ENCODE measurements at regions of chr6 and their contacts with region 1.

Region 1: GRCh38 chr6:28225056-28225834 is at the start of gene ZSCAN9:
- DNase-seq: peak; percentile 93
- ATAC-seq: peak; percentile 93
- H3K4me3 ChIP-seq: peak within 1 kb of the TSS; percentile 92
- H3K27ac ChIP-seq: peak within 1 kb of the TSS; percentile 42
- H3K4me1 ChIP-seq: peaks cover 20% of the 10 kb centered on the region
- H3K27me3 ChIP-seq: no peaks in the 10 kb centered on the region
- CTCF ChIP-seq: no peak
- total RNA-seq, gene ZSCAN9: 10.8 and 11.7 TPM in 2 replicates

Region 2: GRCh38 chr6:28252009-28252975 is 27.0 kb after region 1 on chr6 and contains the start of gene ZKSCAN4:
- CTCF ChIA-PET with region 1: no interaction called
- POLR2A ChIA-PET with region 1: no interaction called
- intact Hi-C with region 1: loop called (anchors 1 kb)
- DNase-seq: peak; percentile 93
- ATAC-seq: peak; percentile 89
- H3K4me3 ChIP-seq: peak within 1 kb of the TSS; percentile 93
- H3K27ac ChIP-seq: 0 out of 2 replicates have a peak within 1 kb of the TSS, but pooled peaks have one; percentile 4
- H3K4me1 ChIP-seq: peaks cover 12% of the 10 kb centered on the region
- H3K27me3 ChIP-seq: no peaks in the 10 kb centered on the region
- CTCF ChIP-seq: no peak
- total RNA-seq, gene ZKSCAN4: 2.3 and 3.7 TPM in 2 replicates

Region 3: DNA sequence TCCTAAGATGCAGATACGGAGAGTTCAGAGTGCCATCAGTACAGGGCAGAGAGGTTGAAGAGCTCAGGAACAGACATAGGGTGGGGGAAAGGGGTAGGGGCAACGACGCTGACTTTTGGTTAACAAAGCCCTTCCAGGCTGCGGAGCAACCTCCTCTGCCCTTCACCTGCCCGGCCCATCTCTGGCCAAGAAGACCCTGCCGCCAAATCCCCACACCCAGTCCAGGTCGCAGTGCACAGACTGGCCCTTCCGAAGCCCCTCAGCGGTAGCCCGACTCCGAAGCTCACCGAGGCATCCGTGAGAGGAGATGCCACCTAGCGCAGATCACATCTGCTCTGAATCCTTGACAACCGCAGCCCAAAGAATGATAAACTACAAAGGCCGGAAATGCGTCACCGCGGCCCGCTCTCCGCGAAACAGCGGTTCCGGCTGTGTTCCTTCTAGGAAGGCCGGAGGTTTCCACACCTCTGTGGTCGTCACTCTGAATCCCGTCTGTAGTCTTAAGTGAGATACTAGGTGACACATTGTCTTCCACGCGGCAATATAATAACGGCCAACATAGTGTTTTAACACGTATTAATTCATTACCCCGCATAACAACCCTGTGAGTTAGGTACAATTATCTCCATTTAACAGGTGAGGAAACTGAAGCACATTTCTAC is 218.0 kb after region 1 on chr6 and contains the start of gene ZSCAN23:
- CTCF ChIA-PET with region 1: no interaction called
- POLR2A ChIA-PET with region 1: no interaction called
- intact Hi-C with region 1: no loop called
- DNase-seq: peak; percentile 91
- ATAC-seq: peak; percentile 98
- H3K4me3 ChIP-seq: peak within 1 kb of the TSS; percentile 88
- H3K27ac ChIP-seq: no peak within 1 kb of the TSS
- H3K4me1 ChIP-seq: peaks cover 9% of the 10 kb centered on the region; the same call in 1 of the 2 replicates
- H3K27me3 ChIP-seq: no peaks in the 10 kb centered on the region
- CTCF ChIP-seq: no peak; the same call in 1 of the 2 replicates
- total RNA-seq, gene ZSCAN23: 2.2 and 3.4 TPM in 2 replicates

Region 4: DNA sequence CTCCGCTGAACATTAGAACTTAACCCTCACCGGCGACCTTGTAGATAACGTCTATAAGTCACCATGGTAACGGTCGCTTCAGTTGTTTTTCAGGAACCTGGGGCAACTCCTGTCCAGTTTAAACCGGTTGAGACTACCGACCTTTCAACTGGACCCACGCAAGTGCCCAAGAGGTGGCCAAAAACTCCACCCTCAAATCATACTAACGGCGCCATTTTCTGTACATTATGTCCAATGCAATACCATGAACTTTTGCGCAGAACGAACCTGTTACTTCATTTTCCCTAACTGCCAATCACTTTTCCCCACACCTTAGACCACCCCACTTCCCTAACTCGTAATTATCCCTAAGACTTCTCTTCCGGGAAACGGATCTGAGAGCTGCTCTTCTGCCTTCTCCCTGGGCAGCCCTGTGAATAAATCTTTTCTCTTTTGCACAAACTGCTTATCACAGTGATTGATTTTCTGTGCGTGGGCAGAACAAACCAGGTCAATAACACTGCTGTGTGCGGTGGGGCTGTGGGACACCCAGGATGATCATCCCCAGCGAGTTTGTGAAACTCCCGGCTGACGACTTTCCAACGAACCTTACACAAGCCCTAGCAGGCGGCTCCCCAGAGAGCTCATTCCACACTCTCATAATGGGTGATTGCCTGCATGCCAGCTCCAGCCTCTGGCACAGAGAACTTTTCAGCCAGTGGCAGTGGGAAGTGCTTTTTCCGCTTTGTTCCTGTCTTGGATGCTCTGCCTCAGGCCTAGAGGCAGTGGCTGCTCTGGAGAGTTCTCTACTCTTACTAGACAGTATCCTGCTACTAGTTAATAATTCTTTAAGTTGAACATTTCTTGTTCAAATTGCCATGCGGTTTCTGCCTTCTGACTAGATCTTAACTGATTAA is 329.0 kb after region 1 on chr6:
- CTCF ChIA-PET with region 1: no interaction called
- POLR2A ChIA-PET with region 1: no interaction called
- intact Hi-C with region 1: no loop called
- DNase-seq: no peak
- ATAC-seq: no peak
- H3K4me3 ChIP-seq: no peak overlapping the region
- H3K27ac ChIP-seq: no peak overlapping the region
- H3K4me1 ChIP-seq: no peaks in the 10 kb centered on the region
- H3K27me3 ChIP-seq: peaks cover 34% of the 10 kb centered on the region
- CTCF ChIP-seq: no peak